PC-9 (cell line): ENCODE measurements at regions of chr7 and their contacts with region 1.

Region 1: GRCh38 chr7:139660317-139661042 is 117.3 kb downstream of the HIPK2 start:
- DNase-seq: peak in 1 of 2 experiments; percentile 44
- H3K4me3 ChIP-seq: no peak overlapping the region
- H3K27ac ChIP-seq: no peak overlapping the region
- H3K4me1 ChIP-seq: no peaks in the 10 kb centered on the region
- H3K27me3 ChIP-seq: no peaks in the 10 kb centered on the region
- CTCF ChIP-seq: no peak

Region 2: GRCh38 chr7:139054101-139054500 is 606.4 kb before region 1 on chr7:
- CTCF ChIA-PET with region 1: no interaction called
- POLR2A ChIA-PET with region 1: interaction called, 13 read pairs
- intact Hi-C with region 1: no loop called
- DNase-seq: no peak
- H3K4me3 ChIP-seq: no peak overlapping the region
- H3K27ac ChIP-seq: no peak overlapping the region
- H3K4me1 ChIP-seq: no peaks in the 10 kb centered on the region
- H3K27me3 ChIP-seq: no peaks in the 10 kb centered on the region
- CTCF ChIP-seq: no peak

Region 3: DNA sequence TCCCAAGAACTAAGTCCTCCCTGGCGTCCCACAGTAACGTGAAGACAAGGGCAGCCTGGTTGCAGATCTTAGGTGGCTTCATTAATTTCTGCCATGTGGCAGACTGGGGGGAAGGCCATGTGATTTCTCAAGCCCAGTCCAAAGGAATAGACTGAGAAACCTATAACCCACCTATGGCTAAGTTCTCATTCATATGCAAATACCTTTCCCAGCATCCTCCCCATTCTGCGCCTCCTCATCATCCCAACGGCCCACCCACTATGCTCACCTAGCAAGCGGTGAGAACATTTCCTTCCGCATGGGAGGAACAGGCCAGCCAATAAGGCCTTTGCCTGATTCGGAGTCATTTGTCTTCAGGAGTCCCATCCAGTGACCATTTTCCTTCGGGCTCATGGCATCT is 145.2 kb before region 1 on chr7:
- CTCF ChIA-PET with region 1: no interaction called
- POLR2A ChIA-PET with region 1: no interaction called
- intact Hi-C with region 1: no loop called
- DNase-seq: no peak
- H3K4me3 ChIP-seq: no peak overlapping the region
- H3K27ac ChIP-seq: no peak overlapping the region
- H3K4me1 ChIP-seq: no peaks in the 10 kb centered on the region
- H3K27me3 ChIP-seq: peaks cover 5% of the 10 kb centered on the region; the same call in 1 of the 2 replicates
- CTCF ChIP-seq: no peak

Region 4: GRCh38 chr7:139680676-139681462 is 20.4 kb after region 1 on chr7:
- CTCF ChIA-PET with region 1: no interaction called
- POLR2A ChIA-PET with region 1: interaction called, 10 read pairs
- intact Hi-C with region 1: no loop called
- DNase-seq: peak; percentile 48 to 56
- H3K4me3 ChIP-seq: no peak overlapping the region
- H3K27ac ChIP-seq: 0 out of 2 replicates have a peak overlapping the region, but pooled peaks have one; percentile 21
- H3K4me1 ChIP-seq: 0 out of 2 replicates have a peak, but pooled peaks cover 3% of the 10 kb centered on the region
- H3K27me3 ChIP-seq: no peaks in the 10 kb centered on the region
- CTCF ChIP-seq: no peak

Region 5: DNA sequence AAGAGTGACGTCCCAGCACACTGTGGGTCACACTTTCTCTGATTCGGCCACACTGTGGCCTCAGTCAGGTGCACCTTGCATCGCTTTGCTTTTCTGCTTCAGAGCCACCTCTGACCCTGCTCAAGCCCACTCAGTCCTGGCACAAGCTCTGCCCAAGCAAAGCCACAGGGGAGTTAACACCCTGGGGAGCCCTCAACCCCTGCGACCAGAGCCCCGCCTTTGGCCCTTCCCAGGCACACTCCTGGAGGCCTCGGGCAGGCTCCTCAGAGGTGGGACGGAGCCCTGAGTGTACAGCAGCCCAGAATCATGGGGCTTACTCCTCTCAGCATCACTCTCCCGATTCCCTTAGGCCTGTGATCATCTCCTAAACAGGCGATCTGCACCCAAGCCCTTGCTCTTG is 46.4 kb after region 1 on chr7:
- CTCF ChIA-PET with region 1: no interaction called
- POLR2A ChIA-PET with region 1: interaction called, 13 read pairs
- intact Hi-C with region 1: no loop called
- DNase-seq: no peak
- H3K4me3 ChIP-seq: no peak overlapping the region
- H3K27ac ChIP-seq: no peak overlapping the region
- H3K4me1 ChIP-seq: no peaks in the 10 kb centered on the region
- H3K27me3 ChIP-seq: no peaks in the 10 kb centered on the region
- CTCF ChIP-seq: no peak

Region 6: DNA sequence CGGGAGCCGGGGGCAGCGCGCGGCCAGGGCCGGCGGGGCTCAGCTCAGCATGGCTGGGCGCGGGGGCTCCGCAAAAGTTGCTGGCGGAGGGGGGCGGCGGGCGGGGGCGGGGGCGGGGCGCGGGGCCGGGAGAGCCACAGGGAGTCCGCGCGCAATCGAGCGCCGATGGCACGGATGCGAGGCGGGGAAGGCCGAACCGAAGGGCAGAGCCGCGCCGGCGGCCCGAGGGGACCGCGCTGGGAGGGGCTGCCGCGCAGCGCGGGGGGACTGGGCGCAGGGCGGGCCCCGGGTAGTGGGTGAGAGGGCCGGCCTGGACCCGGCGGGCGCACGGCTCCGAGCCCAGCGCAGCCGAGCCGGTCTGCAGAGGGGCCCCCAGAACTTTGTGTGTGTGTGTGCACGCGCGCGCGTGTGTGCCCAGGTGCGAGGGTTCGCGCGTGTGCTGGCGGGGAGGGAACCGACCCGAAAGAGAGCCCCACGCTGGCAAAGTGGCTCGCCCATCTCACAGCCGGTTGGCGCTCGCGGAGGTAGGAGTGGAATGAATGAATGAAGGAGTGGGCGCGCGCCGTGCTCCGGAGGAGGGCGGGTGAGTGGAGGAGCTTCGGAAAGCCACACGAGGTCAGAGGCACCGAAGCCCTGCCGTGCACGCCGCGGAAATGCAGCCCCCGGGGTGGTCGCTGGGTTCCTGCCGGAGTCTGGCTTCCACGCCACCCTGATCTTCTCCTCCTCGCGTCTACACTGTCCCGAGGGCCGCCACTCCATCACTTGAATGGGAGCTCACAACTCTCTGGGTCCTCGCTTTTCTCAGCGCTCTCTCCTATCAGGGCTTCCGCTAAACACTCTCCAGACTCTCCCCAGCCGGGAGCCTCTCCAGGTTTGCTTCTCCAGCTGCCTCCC is 117.7 kb after region 1 on chr7 and contains the start of gene HIPK2:
- CTCF ChIA-PET with region 1: no interaction called
- POLR2A ChIA-PET with region 1: no interaction called
- intact Hi-C with region 1: loop called (anchors 5 kb)
- DNase-seq: peak in 1 of 2 experiments; percentile 64
- H3K4me3 ChIP-seq: peak within 1 kb of the TSS; percentile 90
- H3K27ac ChIP-seq: peak within 1 kb of the TSS; percentile 45
- H3K4me1 ChIP-seq: peaks cover 39% of the 10 kb centered on the region
- H3K27me3 ChIP-seq: no peaks in the 10 kb centered on the region
- CTCF ChIP-seq: no peak
- total RNA-seq, gene HIPK2: 23.9 and 35.2 TPM in 2 replicates